H1 (cell line): ENCODE measurements at regions of chr10 and their contacts with region 1.

Region 1: DNA sequence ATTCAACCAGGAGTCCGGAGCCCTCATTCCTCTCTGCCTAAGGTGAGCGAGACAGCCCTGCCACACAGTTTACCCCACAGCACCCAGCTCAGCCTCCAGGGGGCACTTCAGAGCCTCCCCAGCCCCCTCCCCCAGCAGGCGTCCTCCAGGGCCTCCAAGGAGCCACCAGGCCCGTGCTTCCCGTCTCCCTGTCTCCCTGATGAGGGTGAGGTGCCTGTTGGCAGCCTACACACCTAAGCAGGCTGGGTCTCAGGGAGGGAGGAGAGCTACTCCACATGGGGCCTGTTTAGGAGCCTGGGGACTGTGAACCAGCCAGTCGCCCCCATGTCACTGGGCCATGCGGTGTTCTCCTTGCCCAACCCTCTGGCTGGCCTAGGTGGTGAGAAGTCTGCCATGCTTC is 28.9 kb upstream of the TRIM8 start:
- DNase-seq: peak in 1 of 2 experiments; percentile 86
- H3K4me3 ChIP-seq: no peak overlapping the region
- H3K27ac ChIP-seq: no peak overlapping the region
- H3K4me1 ChIP-seq: peaks cover 0 to 6% (median 2%) of the 10 kb centered on the region in 4 experiments; a peak in 4 of 7 replicates
- H3K27me3 ChIP-seq: no peaks in the 10 kb centered on the region
- CTCF ChIP-seq: peak; percentile 78 to 83 (median 80)
- EP300 ChIP-seq: no peak
- POLR2A ChIP-seq: no peak
- RAD21 ChIP-seq: peak; percentile 71 to 82

Region 2: GRCh38 chr10:102300278-102300843 is 315.0 kb before region 1 on chr10:
- CTCF ChIA-PET with region 1: no interaction called
- POLR2A ChIA-PET with region 1: no interaction called
- DNase-seq: no peak
- H3K4me3 ChIP-seq: no peak overlapping the region
- H3K27ac ChIP-seq: no peak overlapping the region
- H3K4me1 ChIP-seq: no peaks in the 10 kb centered on the region
- H3K27me3 ChIP-seq: no peaks in the 10 kb centered on the region
- CTCF ChIP-seq: no peak
- EP300 ChIP-seq: no peak
- POLR2A ChIP-seq: no peak
- RAD21 ChIP-seq: no peak

Region 3: DNA sequence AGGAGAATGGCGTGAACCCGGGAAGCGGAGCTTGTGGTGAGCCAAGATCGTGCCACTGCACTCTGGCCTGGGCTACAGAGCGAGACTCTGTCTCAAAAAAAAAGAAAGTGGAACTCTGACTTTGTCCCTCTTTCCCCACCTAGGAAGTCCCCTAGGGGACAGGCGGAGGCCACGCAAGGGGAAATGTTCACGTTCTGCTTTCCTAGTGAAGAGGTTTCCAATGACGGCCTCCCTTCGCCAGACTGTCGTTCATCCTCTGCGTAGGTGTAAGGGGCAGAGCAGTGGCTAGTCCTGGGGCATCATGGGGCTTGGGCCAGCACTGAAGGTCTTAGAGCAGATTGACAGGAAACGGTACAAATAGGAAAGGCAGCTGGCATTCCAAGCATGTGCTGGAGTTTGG is 81.0 kb before region 1 on chr10:
- CTCF ChIA-PET with region 1: no interaction called
- POLR2A ChIA-PET with region 1: no interaction called
- DNase-seq: no peak
- H3K4me3 ChIP-seq: no peak overlapping the region
- H3K27ac ChIP-seq: no peak overlapping the region
- H3K4me1 ChIP-seq: no peaks in the 10 kb centered on the region
- H3K27me3 ChIP-seq: no peaks in the 10 kb centered on the region
- CTCF ChIP-seq: no peak
- EP300 ChIP-seq: no peak
- POLR2A ChIP-seq: no peak
- RAD21 ChIP-seq: no peak

Region 4: DNA sequence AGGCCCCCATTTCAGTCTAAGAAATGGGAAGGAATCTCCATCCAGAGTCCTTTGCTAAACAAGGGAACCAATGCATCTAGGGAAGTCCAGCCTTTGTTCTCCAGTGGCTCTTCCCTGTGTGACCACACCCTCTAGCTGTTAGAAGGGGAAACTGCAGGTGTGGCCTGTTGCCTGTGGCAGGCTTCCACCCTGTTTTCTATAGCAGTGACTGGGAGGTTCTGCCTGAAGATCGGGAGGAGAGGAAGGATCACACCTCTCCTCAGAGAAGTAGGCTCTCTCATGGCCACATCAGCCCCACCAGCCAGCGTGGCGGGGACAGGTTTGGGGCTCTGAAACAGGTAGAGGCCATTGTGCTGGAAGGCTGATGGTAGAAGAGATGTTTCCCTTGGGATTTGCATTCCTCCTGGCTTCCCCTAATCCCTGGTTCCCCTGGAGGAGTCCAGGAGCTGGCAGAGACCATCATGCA is 18.8 kb before region 1 on chr10:
- CTCF ChIA-PET with region 1: interaction called, 69 read pairs
- POLR2A ChIA-PET with region 1: no interaction called
- DNase-seq: peak in 1 of 2 experiments; percentile 65
- H3K4me3 ChIP-seq: no peak overlapping the region
- H3K27ac ChIP-seq: no peak overlapping the region
- H3K4me1 ChIP-seq: peaks cover 0 to 2% (median 0%) of the 10 kb centered on the region in 4 experiments; a peak in 3 of 7 replicates
- H3K27me3 ChIP-seq: no peaks in the 10 kb centered on the region; a peak in 1 of 7 replicates
- CTCF ChIP-seq: peak; percentile 81 to 97 (median 87)
- EP300 ChIP-seq: no peak
- POLR2A ChIP-seq: no peak
- RAD21 ChIP-seq: peak; percentile 77 to 85

Region 5: DNA sequence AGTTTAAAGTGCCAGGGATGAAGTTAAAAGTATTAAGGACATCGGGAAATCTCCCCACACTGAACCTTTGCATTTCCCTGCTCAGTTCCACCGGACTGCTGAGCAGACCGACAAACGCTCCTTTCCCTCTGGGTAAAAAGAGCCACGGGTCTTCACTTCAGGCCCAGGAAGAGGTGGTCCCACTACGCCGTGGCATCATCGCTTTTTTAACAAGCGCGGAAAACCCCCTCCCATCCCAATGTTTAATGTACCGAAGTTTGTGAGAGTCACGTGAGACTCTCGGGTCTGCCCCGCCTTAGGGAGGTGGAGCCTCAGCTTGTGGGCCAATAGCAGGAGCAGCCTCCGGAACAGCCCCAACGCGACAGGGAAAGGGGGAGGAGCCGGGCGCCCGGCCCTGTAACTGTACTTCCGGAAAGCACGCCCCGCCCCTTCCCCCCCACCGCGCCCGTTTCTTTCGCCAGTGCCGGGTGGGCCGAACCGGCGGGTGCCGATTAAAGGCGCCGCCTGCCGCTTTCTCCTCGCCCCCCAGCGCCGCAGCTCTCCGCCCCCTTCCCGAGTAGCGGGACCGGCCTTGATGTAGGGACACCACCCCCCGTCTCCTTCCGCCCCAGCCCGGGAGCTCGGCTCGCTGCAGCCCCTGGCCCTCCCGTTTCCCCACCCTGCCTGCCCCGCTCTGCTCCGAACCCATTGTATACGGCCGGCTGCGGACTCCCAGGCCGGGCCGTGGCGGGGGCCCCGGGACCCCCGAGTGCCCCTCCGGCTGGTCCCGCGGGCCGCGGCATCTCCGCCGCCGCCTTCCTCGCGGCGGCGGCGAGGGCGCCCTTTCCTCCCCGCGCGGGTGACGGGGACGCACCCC is 26.7 kb after region 1 on chr10:
- CTCF ChIA-PET with region 1: interaction called, 24 read pairs
- POLR2A ChIA-PET with region 1: interaction called, 11 read pairs
- DNase-seq: peak; percentile 94
- H3K4me3 ChIP-seq: peak overlapping the region; percentile 40 to 81 (median 63)
- H3K27ac ChIP-seq: peak overlapping the region; percentile 80; the same call in 1 of the 2 replicates
- H3K4me1 ChIP-seq: peaks cover 6 to 16% (median 13%) of the 10 kb centered on the region in 4 experiments
- H3K27me3 ChIP-seq: no peaks in the 10 kb centered on the region
- CTCF ChIP-seq: no peak
- EP300 ChIP-seq: no peak
- POLR2A ChIP-seq: peak in 1 of 2 experiments; percentile 77; a peak in 2 of 3 replicates
- RAD21 ChIP-seq: no peak

Region 6: GRCh38 chr10:102660888-102661657 is 45.7 kb after region 1 on chr10:
- CTCF ChIA-PET with region 1: interaction called, 11 read pairs
- POLR2A ChIA-PET with region 1: interaction called, 3 read pairs
- DNase-seq: peak in 1 of 2 experiments; percentile 62
- H3K4me3 ChIP-seq: peak overlapping the region in 1 of 4 experiments; percentile 16; a peak in 1 of 8 replicates
- H3K27ac ChIP-seq: no peak overlapping the region
- H3K4me1 ChIP-seq: peaks cover 0 to 12% (median 7%) of the 10 kb centered on the region in 4 experiments; a peak in 5 of 7 replicates
- H3K27me3 ChIP-seq: no peaks in the 10 kb centered on the region
- CTCF ChIP-seq: no peak
- EP300 ChIP-seq: no peak
- POLR2A ChIP-seq: no peak
- RAD21 ChIP-seq: no peak